ENCODE measurements at regions of chr10 and their contacts with region 1.

Region 1: GRCh38 chr10:105691811-105692210 is 1050.7 kb downstream of the SORCS3 start:
- ATAC-seq: peak in 6 of 8 experiments; percentile 41 to 75 (median 50)
- H3K4me3 ChIP-seq: no peak overlapping the region
- H3K27ac ChIP-seq: no peak overlapping the region
- H3K4me1 ChIP-seq: no peaks in the 10 kb centered on the region

Region 2: GRCh38 chr10:104580774-104581675 is 1110.8 kb before region 1 on chr10:
- in situ Hi-C with region 1: loop called in 1 of 9 experiments (anchors 25 kb)
- ATAC-seq: peak; percentile 67 to 98 (median 79)
- H3K4me3 ChIP-seq: no peak overlapping the region
- H3K27ac ChIP-seq: no peak overlapping the region
- H3K4me1 ChIP-seq: peaks cover 16 to 18% of the 10 kb centered on the region in 2 donors

Region 3: GRCh38 chr10:104642658-104643302 is 1049.0 kb before region 1 on chr10:
- in situ Hi-C with region 1: loop called in 2 of 9 experiments (anchors 25 kb)
- ATAC-seq: peak; percentile 48 to 75 (median 62)
- H3K4me3 ChIP-seq: peak overlapping the region; percentile 66 to 92 (median 77)
- H3K27ac ChIP-seq: peak overlapping the region in 1 of 2 donors; percentile 48
- H3K4me1 ChIP-seq: peaks cover 29 to 38% of the 10 kb centered on the region in 2 donors

Region 4: GRCh38 chr10:105063796-105064195 is 628.0 kb before region 1 on chr10:
- in situ Hi-C with region 1: loop called in 1 of 9 experiments (anchors 25 kb)
- ATAC-seq: peak in 4 of 8 experiments; percentile 53 to 94 (median 76)
- H3K4me3 ChIP-seq: no peak overlapping the region
- H3K27ac ChIP-seq: no peak overlapping the region
- H3K4me1 ChIP-seq: no peaks in the 10 kb centered on the region

Region 5: GRCh38 chr10:105328503-105329133 is 363.2 kb before region 1 on chr10:
- in situ Hi-C with region 1: loop called in 1 of 9 experiments (anchors 25 kb)
- ATAC-seq: peak in 3 of 8 experiments; percentile 50 to 93 (median 55)
- H3K4me3 ChIP-seq: no peak overlapping the region
- H3K27ac ChIP-seq: no peak overlapping the region
- H3K4me1 ChIP-seq: no peaks in the 10 kb centered on the region

Measured in motor neuron (in vitro differentiated cells).